Endothelial cell of umbilical vein (primary cell): ENCODE measurements at regions of chr2 and their contacts with region 1.

Region 1: GRCh38 chr2:46067851-46068305 is 229.3 kb upstream of the EPAS1 start:
- DNase-seq: peak; percentile 98
- H3K4me3 ChIP-seq: peak overlapping the region in 1 of 3 experiments; percentile 40
- H3K27ac ChIP-seq: peak overlapping the region; percentile 95
- H3K4me1 ChIP-seq: peaks cover 53% of the 10 kb centered on the region
- H3K27me3 ChIP-seq: no peaks in the 10 kb centered on the region
- CTCF ChIP-seq: no peak
- POLR2A ChIP-seq: no peak

Region 2: DNA sequence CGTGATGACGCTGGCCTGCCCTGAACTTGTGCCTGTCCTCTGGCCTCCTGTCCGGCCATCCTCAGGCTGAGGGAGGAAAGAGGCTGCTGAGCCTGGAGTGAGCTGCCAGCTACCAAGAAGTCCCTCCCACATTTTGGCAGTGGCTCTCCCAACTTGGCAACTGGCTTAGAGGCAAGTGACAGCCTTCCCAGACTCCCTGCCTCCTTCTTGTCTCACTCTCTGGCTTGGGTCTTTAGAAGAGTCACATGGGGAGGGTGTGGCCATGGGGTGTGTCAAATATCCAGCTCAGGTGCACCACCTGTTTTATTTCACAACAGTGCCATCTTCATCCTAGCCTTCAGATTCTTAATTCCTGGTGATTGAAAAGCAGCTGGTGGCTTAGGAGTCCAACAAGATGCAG is 193.5 kb before region 1 on chr2:
- CTCF ChIA-PET with region 1: no interaction called
- POLR2A ChIA-PET with region 1: no interaction called
- dilution Hi-C with region 1: no loop called
- intact Hi-C with region 1: no loop called
- DNase-seq: no peak
- H3K4me3 ChIP-seq: no peak overlapping the region
- H3K27ac ChIP-seq: no peak overlapping the region
- H3K4me1 ChIP-seq: peaks cover 6% of the 10 kb centered on the region
- H3K27me3 ChIP-seq: no peaks in the 10 kb centered on the region
- CTCF ChIP-seq: no peak
- POLR2A ChIP-seq: no peak

Region 3: GRCh38 chr2:45909663-45910191 is 158.2 kb before region 1 on chr2:
- CTCF ChIA-PET with region 1: no interaction called
- POLR2A ChIA-PET with region 1: no interaction called
- dilution Hi-C with region 1: no loop called
- intact Hi-C with region 1: no loop called
- DNase-seq: no peak
- H3K4me3 ChIP-seq: no peak overlapping the region
- H3K27ac ChIP-seq: no peak overlapping the region
- H3K4me1 ChIP-seq: no peaks in the 10 kb centered on the region
- H3K27me3 ChIP-seq: no peaks in the 10 kb centered on the region
- CTCF ChIP-seq: no peak
- POLR2A ChIP-seq: no peak

Region 4: GRCh38 chr2:45974056-45974455 is 93.8 kb before region 1 on chr2:
- CTCF ChIA-PET with region 1: no interaction called
- POLR2A ChIA-PET with region 1: no interaction called
- dilution Hi-C with region 1: no loop called
- intact Hi-C with region 1: no loop called
- DNase-seq: no peak
- H3K4me3 ChIP-seq: no peak overlapping the region
- H3K27ac ChIP-seq: no peak overlapping the region
- H3K4me1 ChIP-seq: no peaks in the 10 kb centered on the region
- H3K27me3 ChIP-seq: no peaks in the 10 kb centered on the region
- CTCF ChIP-seq: no peak
- POLR2A ChIP-seq: no peak

Region 5: DNA sequence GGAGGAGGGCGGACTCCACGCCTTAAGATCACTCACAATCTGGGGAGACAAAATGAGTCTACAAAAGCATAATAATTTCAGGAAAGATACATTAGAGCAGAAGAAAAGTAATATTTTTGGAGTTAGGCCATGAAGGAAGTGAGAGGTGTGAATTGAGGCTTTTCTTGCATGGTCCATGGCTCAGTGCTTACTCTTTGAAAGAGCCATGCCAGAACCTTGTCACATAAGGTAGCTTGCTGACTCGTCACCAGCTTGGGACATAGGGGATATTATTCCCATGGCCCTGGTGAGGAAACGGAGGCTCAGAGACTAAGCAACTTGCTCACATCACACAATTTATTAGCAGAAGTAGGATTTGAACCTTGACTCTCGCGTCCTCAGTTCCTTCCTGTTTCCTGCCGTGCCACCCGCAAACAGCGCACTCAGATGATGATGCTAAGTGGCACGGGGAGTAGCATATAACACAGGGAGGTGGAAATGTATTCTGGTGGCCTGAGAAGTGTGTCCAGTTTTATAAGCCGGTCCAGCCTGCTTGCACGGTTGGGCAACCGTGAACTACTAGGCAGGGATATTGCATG is 82.9 kb before region 1 on chr2:
- CTCF ChIA-PET with region 1: no interaction called
- POLR2A ChIA-PET with region 1: no interaction called
- dilution Hi-C with region 1: no loop called
- intact Hi-C with region 1: no loop called
- DNase-seq: peak; percentile 10
- H3K4me3 ChIP-seq: no peak overlapping the region
- H3K27ac ChIP-seq: no peak overlapping the region
- H3K4me1 ChIP-seq: peaks cover 8% of the 10 kb centered on the region
- H3K27me3 ChIP-seq: no peaks in the 10 kb centered on the region
- CTCF ChIP-seq: no peak
- POLR2A ChIP-seq: no peak

Region 6: GRCh38 chr2:46029332-46029811 is 38.5 kb before region 1 on chr2:
- CTCF ChIA-PET with region 1: interaction called, 20 read pairs
- POLR2A ChIA-PET with region 1: no interaction called
- dilution Hi-C with region 1: no loop called
- intact Hi-C with region 1: loop called (anchors 1 kb)
- DNase-seq: peak; percentile 96
- H3K4me3 ChIP-seq: no peak overlapping the region
- H3K27ac ChIP-seq: peak overlapping the region; percentile 77
- H3K4me1 ChIP-seq: peaks cover 20% of the 10 kb centered on the region
- H3K27me3 ChIP-seq: no peaks in the 10 kb centered on the region
- CTCF ChIP-seq: peak; percentile 32 to 47
- POLR2A ChIP-seq: no peak

Region 7: DNA sequence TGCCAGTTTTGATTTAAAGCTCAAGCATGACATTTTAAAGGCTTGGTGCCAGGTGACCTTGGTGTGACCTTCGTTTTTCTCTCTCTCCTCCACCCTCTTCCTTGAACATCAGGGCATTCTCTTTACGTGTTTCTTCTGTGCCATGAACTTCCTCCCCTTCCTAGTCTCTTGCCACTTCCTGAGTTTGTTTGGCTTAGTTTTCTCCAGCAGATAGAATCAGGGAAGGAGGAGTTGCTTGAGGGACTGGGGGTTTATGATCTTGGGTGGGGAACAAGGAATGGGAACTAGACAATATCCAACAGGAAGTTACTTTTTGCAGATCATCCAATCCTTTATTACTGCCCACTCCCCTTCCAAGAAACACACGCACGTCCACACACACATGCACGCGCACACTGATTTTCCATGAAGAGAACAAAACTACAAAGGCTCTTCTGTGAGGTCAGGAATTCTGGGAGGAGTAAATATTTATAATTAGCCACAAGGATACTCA is 18.7 kb after region 1 on chr2:
- CTCF ChIA-PET with region 1: interaction called, 9 read pairs
- POLR2A ChIA-PET with region 1: no interaction called
- dilution Hi-C with region 1: no loop called
- intact Hi-C with region 1: loop called (anchors 1 kb)
- DNase-seq: peak; percentile 82
- H3K4me3 ChIP-seq: no peak overlapping the region
- H3K27ac ChIP-seq: peak overlapping the region; percentile 39
- H3K4me1 ChIP-seq: peaks cover 42% of the 10 kb centered on the region
- H3K27me3 ChIP-seq: no peaks in the 10 kb centered on the region
- CTCF ChIP-seq: no peak
- POLR2A ChIP-seq: no peak

Region 8: DNA sequence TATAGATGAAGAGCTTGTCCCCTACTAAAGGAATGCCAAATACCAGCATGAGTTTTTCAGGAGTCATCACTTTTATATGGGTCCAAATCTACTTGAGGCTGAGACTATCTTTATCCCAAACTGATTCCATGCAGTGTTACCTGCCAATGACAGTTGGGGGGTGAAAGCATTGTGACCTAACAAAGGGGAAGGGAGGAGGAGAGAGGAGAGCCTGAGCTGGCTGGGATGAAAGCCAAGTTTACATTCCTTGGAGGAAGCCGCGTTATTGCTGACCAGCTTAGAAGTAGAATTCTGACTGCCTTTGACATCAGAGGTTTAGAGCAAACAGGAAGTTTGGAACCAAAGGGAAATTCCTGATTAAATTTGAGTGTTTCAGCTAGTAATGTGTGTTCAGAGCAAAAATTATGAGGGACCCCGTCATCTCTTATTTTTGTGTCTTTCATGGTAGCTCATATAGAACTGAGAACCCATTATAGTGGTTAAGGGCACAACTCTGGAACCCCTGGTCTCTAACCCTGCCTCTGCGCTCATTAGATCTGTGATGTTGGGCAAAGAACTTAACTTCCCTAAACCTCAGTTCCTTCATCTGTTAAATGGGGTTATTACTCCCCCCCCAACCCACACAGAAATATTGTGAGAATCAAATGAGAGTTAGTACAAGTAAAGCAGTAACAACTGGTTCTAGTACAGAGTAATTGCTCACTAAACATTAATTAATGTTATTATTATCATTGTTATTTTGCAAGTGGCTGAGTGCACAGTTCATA is 30.0 kb after region 1 on chr2:
- CTCF ChIA-PET with region 1: interaction called, 33 read pairs
- POLR2A ChIA-PET with region 1: interaction called, 3 read pairs
- dilution Hi-C with region 1: no loop called
- intact Hi-C with region 1: loop called (anchors 1 kb)
- DNase-seq: peak; percentile 96
- H3K4me3 ChIP-seq: no peak overlapping the region
- H3K27ac ChIP-seq: peak overlapping the region; percentile 95
- H3K4me1 ChIP-seq: peaks cover 17% of the 10 kb centered on the region
- H3K27me3 ChIP-seq: no peaks in the 10 kb centered on the region
- CTCF ChIP-seq: no peak
- POLR2A ChIP-seq: no peak

Region 9: DNA sequence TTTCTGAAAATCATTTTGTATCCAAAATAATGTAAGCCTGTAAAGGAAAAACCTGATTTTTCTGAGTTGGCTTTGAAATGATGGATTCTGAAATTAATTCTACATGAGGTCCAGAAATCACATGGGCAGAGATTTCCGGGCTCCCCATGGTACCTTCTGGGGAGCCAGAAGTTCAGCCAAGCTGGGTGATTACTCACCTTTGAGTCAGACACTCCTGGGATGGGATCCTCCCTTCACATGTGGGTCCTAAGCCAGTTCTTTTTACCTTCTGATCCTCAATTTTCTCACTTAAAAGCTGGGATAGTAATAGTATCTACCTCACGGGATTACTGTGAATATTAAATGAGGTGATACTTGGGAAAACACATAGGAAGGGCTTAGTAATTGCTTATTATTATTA is 49.5 kb after region 1 on chr2:
- CTCF ChIA-PET with region 1: interaction called, 17 read pairs
- POLR2A ChIA-PET with region 1: no interaction called
- dilution Hi-C with region 1: no loop called
- intact Hi-C with region 1: loop called (anchors 1 kb)
- DNase-seq: peak; percentile 52
- H3K4me3 ChIP-seq: no peak overlapping the region
- H3K27ac ChIP-seq: peak overlapping the region; percentile 78
- H3K4me1 ChIP-seq: peaks cover 51% of the 10 kb centered on the region
- H3K27me3 ChIP-seq: no peaks in the 10 kb centered on the region
- CTCF ChIP-seq: no peak
- POLR2A ChIP-seq: no peak

Region 10: DNA sequence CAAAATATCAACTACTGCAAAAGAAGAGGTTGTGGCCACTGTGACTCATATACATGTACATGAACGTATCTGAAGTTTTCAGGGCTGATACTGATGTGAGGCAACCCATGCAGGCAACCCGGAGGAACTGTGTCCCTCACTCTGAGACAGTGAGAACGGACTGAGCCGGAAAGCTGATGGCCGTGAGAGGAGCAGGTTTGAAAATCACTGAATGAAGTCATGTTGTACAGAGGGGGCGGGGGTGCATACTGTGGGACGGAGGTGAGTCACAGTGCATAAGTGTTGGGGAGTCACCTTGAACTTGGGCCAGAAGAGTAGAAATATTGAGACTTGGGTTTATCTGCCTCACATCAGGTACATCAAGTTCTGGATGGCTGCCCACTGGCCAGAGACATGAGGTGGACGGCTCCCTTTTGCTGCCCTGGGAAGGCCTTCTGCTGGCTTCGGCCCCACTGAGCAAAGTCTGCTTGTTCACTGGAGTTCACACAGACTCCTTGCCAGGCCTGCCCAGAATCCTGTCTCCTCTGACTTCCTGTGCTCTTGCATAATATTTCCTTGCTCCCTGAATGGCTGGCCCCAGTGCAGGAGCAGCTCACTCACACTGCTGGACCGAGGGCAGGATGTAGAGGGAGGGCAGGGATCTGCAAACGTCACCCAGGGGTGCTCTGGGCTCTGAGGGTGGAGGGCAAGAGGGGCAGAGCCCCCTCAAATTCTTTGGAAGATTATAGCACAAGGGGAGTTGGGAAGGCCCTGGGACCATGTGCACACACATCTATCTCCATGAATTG is 247.4 kb after region 1 on chr2:
- CTCF ChIA-PET with region 1: interaction called, 9 read pairs
- POLR2A ChIA-PET with region 1: no interaction called
- dilution Hi-C with region 1: no loop called
- intact Hi-C with region 1: loop called (anchors 1 kb)
- DNase-seq: peak; percentile 97
- H3K4me3 ChIP-seq: no peak overlapping the region
- H3K27ac ChIP-seq: peak overlapping the region; percentile 80
- H3K4me1 ChIP-seq: peaks cover 44% of the 10 kb centered on the region
- H3K27me3 ChIP-seq: no peaks in the 10 kb centered on the region
- CTCF ChIP-seq: no peak
- POLR2A ChIP-seq: peak; percentile 69